Heart left ventricle (tissue), 16 donors: ENCODE measurements at regions of chr11 and their contacts with region 1.

Region 1: DNA sequence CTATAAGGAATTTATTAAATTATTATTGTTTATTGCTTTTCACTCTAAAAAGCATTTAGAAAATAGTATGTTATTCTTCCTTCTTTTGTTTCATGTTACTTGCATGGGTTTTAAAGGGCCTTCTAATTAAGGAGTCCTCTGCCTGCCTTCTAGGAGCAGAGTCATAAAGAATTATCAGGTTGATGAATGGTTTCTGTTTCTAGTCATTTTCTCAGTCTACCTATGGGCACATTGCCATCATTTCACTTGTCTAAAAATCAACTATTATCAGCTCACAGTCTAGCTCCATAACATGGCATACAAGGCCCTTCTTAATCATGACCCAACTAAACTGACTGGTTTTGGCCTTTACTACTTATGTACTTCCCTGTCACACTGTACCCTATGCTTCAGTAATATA is 16.2 kb downstream of the DYNC2H1 start:
- DNase-seq: no peak
- ATAC-seq: no peak
- H3K4me3 ChIP-seq: no peak overlapping the region
- H3K27ac ChIP-seq: no peak overlapping the region
- H3K4me1 ChIP-seq: no peaks in the 10 kb centered on the region
- H3K27me3 ChIP-seq: no peaks in the 10 kb centered on the region
- CTCF ChIP-seq: no peak
- POLR2A ChIP-seq: no peak

Region 2: GRCh38 chr11:102950622-102951107 is 174.8 kb before region 1 on chr11:
- intact Hi-C with region 1: no loop called
- DNase-seq: no peak
- ATAC-seq: peak in 1 of 4 donors; percentile 61
- H3K4me3 ChIP-seq: no peak overlapping the region
- H3K27ac ChIP-seq: no peak overlapping the region
- H3K4me1 ChIP-seq: no peaks in the 10 kb centered on the region
- H3K27me3 ChIP-seq: no peaks in the 10 kb centered on the region
- CTCF ChIP-seq: no peak
- POLR2A ChIP-seq: no peak

Region 3: GRCh38 chr11:103067118-103067517 is 58.3 kb before region 1 on chr11:
- intact Hi-C with region 1: loop called in 1 of 10 experiments (anchors 10 kb)
- DNase-seq: no peak
- ATAC-seq: no peak
- H3K4me3 ChIP-seq: no peak overlapping the region
- H3K27ac ChIP-seq: no peak overlapping the region
- H3K4me1 ChIP-seq: peaks cover 0 to 31% (median 0%) of the 10 kb centered on the region in 12 donors
- H3K27me3 ChIP-seq: no peaks in the 10 kb centered on the region
- CTCF ChIP-seq: no peak
- POLR2A ChIP-seq: no peak